Esophagus squamous epithelium (tissue), 5 donors: ENCODE measurements at regions of chr12 and their contacts with region 1.

Region 1: DNA sequence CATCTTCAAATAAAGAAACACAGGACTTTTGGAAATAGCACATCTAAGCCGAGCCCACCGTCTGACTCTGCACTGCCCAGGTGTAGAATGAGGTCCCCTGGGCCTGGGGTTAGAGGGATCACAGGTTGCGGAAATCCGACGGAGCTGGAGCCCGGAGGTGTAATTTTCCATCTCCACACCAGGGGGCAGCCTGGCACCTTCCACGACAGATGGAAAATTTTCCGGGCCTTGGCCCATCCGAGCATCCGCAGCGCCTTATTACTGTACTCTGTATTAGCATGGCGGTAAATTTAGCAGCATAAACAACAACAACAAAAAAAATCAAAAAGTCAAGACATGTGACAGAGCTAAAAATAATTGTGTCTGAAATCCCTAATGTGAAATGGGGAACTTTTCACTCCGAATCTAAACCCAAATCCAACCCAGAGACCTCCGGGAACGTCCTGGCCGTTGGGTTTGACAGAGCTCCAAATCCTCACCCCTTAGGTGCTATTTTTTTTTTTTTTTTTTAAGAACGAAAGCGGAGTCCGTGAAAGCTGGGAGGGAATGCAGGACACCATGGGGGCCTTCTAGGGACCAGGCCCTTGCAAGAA is 93.9 kb downstream of the KSR2 start:
- DNase-seq: no peak
- H3K4me3 ChIP-seq: no peak overlapping the region
- H3K27ac ChIP-seq: no peak overlapping the region
- H3K4me1 ChIP-seq: peaks cover 0 to 6% (median 0%) of the 10 kb centered on the region in 3 donors
- H3K27me3 ChIP-seq: peaks cover 0 to 28% (median 0%) of the 10 kb centered on the region in 4 donors
- CTCF ChIP-seq: peak; percentile 73 to 92 (median 89)
- POLR2A ChIP-seq: no peak

Region 2: GRCh38 chr12:118035246-118036041 is 160.5 kb after region 1 on chr12:
- intact Hi-C with region 1: loop called (anchors 10 kb)
- DNase-seq: no peak
- H3K4me3 ChIP-seq: no peak overlapping the region
- H3K27ac ChIP-seq: peak overlapping the region in 1 of 4 donors; percentile 26
- H3K4me1 ChIP-seq: peaks cover 0 to 8% (median 0%) of the 10 kb centered on the region in 3 donors
- H3K27me3 ChIP-seq: no peaks in the 10 kb centered on the region
- CTCF ChIP-seq: no peak
- POLR2A ChIP-seq: no peak